RWPE1 (cell line): ENCODE measurements at regions of chr6 and their contacts with region 1.

Region 1: GRCh38 chr6:144543006-144543871 is 258.1 kb downstream of the UTRN start:
- DNase-seq: peak; percentile 17
- H3K27ac ChIP-seq: no peak overlapping the region
- CTCF ChIP-seq: no peak

Region 2: DNA sequence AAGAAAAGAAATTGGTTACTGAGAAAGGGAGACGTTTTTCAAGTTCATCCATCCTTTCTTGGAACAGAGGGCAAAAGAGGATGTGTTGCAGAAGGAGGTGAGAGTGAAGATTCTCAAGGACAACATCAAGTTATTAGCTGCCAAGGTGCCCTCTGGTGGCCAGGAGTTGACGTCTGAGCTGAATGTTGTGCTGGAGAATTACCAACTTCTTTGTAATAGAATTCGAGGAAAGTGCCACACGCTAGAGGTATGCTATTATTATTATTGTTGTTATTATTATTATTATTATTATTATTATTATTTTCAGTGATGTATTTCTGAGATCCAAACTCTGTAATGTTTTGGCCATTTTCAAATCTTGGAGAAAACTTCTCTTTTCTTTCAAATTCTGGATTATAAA is 61.1 kb before region 1 on chr6:
- CTCF ChIA-PET with region 1: interaction called, 10 read pairs
- POLR2A ChIA-PET with region 1: no interaction called
- DNase-seq: peak; percentile 70
- H3K27ac ChIP-seq: no peak overlapping the region
- CTCF ChIP-seq: peak; percentile 69